Naive thymus-derived CD4-positive, alpha-beta T cell (primary cell): ENCODE measurements at regions of chr1 and their contacts with region 1.

Region 1: DNA sequence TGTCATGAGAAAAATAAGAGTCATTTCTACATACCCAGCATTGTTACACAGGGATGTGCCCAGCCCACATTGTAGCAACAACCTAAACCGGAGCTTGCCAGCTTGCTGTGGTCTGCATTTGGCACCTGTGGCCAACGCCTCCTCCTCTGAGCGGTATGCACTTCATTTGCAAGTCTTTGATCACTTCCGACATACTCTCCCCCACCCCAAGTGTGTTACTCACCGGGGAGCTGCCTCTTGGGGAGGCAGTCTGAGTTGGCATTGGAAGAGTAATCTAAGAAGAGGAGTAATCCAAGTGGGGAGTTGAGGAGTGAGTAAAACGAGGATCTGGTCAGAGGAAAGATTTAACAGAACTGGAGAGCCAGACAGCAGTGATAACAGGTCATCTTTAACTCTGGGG is 3.8 kb downstream of the BCL9 start:
- DNase-seq: peak; percentile 43 to 92 (median 86)
- ATAC-seq: peak; percentile 86
- H3K4me3 ChIP-seq: peak overlapping the region; percentile 17
- H3K4me3 Mint-ChIP-seq: peak overlapping the region in 4 of 10 donors; percentile 52 to 79 (median 64)
- H3K27ac ChIP-seq: peak overlapping the region; percentile 26
- H3K27ac Mint-ChIP-seq: peak overlapping the region in 2 of 9 donors; percentile 44 to 65
- H3K4me1 ChIP-seq: peaks cover 43 to 45% of the 10 kb centered on the region in 2 donors
- H3K4me1 Mint-ChIP-seq: peaks cover 45 to 74% (median 69%) of the 10 kb centered on the region in 7 donors
- H3K27me3 ChIP-seq: peaks cover 0 to 4% of the 10 kb centered on the region in 2 donors
- H3K27me3 Mint-ChIP-seq: peaks cover 0 to 3% (median 0%) of the 10 kb centered on the region in 5 donors

Region 2: GRCh38 chr1:147172168-147172992 is 372.8 kb before region 1 on chr1 and contains the start of gene PRKAB2:
- CTCF ChIA-PET with region 1: no interaction called
- POLR2A ChIA-PET with region 1: no interaction called
- intact Hi-C with region 1: loop called in 1 of 2 experiments (anchors 1 kb)
- DNase-seq: peak; percentile 67 to 95 (median 86)
- ATAC-seq: peak; percentile 93
- H3K4me3 ChIP-seq: peak within 1 kb of the TSS; percentile 91
- H3K4me3 Mint-ChIP-seq: peak within 1 kb of the TSS; percentile 82 to 99 (median 98)
- H3K27ac ChIP-seq: peak within 1 kb of the TSS; percentile 76
- H3K27ac Mint-ChIP-seq: peak within 1 kb of the TSS; percentile 66 to 96 (median 95)
- H3K4me1 ChIP-seq: peaks cover 15% of the 10 kb centered on the region in 2 donors
- H3K4me1 Mint-ChIP-seq: peaks cover 19 to 55% (median 41%) of the 10 kb centered on the region in 7 donors
- H3K27me3 ChIP-seq: no peaks in the 10 kb centered on the region
- H3K27me3 Mint-ChIP-seq: peaks cover 0 to 10% (median 0%) of the 10 kb centered on the region in 5 donors
- total RNA-seq, gene PRKAB2: 8.1 to 26.9 (median 11.4) TPM

Region 3: GRCh38 chr1:147515046-147515869 is 29.9 kb before region 1 on chr1:
- CTCF ChIA-PET with region 1: interaction called, 5 read pairs
- POLR2A ChIA-PET with region 1: interaction called, 5 read pairs
- intact Hi-C with region 1: loop called in 1 of 2 experiments (anchors 1 kb)
- DNase-seq: peak in 6 of 9 donors; percentile 11 to 37 (median 24)
- ATAC-seq: peak; percentile 42
- H3K4me3 ChIP-seq: no peak overlapping the region
- H3K4me3 Mint-ChIP-seq: no peak overlapping the region
- H3K27ac ChIP-seq: no peak overlapping the region
- H3K27ac Mint-ChIP-seq: peak overlapping the region in 1 of 9 donors; percentile 6
- H3K4me1 ChIP-seq: no peaks in the 10 kb centered on the region
- H3K4me1 Mint-ChIP-seq: peaks cover 0 to 15% (median 6%) of the 10 kb centered on the region in 7 donors
- H3K27me3 ChIP-seq: no peaks in the 10 kb centered on the region
- H3K27me3 Mint-ChIP-seq: peaks cover 0 to 19% (median 3%) of the 10 kb centered on the region in 5 donors

Region 4: GRCh38 chr1:147558045-147558444 is 12.9 kb after region 1 on chr1:
- CTCF ChIA-PET with region 1: interaction called, 3 read pairs
- POLR2A ChIA-PET with region 1: interaction called, 12 read pairs
- intact Hi-C with region 1: loop called in 1 of 2 experiments (anchors 2 kb)
- DNase-seq: no peak
- ATAC-seq: no peak
- H3K4me3 ChIP-seq: no peak overlapping the region
- H3K4me3 Mint-ChIP-seq: no peak overlapping the region
- H3K27ac ChIP-seq: no peak overlapping the region
- H3K27ac Mint-ChIP-seq: no peak overlapping the region
- H3K4me1 ChIP-seq: peaks cover 0 to 5% of the 10 kb centered on the region in 2 donors
- H3K4me1 Mint-ChIP-seq: peaks cover 0 to 43% (median 37%) of the 10 kb centered on the region in 7 donors
- H3K27me3 ChIP-seq: no peaks in the 10 kb centered on the region
- H3K27me3 Mint-ChIP-seq: no peaks in the 10 kb centered on the region

Region 5: DNA sequence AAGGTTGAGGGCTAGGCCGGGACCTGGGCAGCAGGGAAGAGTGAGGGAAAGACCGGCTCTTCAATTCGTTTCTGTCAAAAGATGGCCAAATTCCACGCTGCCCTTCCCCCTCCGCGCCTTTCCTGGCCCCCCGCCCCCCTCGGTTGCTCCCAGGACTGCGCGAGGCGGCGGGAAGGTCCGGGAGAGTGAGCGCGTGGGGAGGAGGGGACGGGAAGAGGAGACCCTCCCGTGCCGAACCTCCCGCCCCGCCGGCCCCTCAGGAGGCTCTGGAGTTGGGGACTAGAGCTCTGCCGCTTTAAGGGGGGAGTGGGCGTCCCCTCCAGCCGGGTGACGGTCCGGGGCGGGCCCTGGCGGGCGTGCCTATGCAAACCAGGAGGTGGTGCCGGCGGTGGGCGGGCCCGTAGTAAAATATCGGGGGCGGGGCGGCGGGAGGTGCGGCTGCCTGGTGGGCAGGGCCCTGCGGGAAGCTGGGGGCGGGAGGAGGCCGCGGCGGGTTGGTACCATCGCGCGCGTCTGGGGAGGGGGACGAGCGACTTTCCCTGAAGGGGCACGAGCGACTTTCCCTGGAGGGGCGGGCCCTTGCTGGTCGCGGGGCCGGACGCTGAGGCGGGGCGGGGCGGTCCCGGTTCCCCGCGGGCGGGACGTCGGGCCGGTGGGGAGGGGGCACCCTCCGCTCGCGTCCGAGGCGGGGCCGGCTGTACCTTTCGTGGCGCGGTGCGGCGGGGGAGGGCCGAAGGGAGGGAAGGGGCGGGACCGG is 54.4 kb after region 1 on chr1:
- CTCF ChIA-PET with region 1: interaction called, 9 read pairs
- POLR2A ChIA-PET with region 1: interaction called, 73 read pairs
- intact Hi-C with region 1: loop called (anchors 1 kb)
- DNase-seq: peak; percentile 90 to 97 (median 96)
- ATAC-seq: peak; percentile 90
- H3K4me3 ChIP-seq: peak overlapping the region; percentile 72
- H3K4me3 Mint-ChIP-seq: peak overlapping the region; percentile 82 to 96 (median 90)
- H3K27ac ChIP-seq: peak overlapping the region; percentile 73
- H3K27ac Mint-ChIP-seq: peak overlapping the region; percentile 55 to 94 (median 87)
- H3K4me1 ChIP-seq: peaks cover 8 to 15% of the 10 kb centered on the region in 2 donors
- H3K4me1 Mint-ChIP-seq: peaks cover 15 to 38% (median 35%) of the 10 kb centered on the region in 7 donors
- H3K27me3 ChIP-seq: no peaks in the 10 kb centered on the region
- H3K27me3 Mint-ChIP-seq: peaks cover 0 to 18% (median 0%) of the 10 kb centered on the region in 5 donors

Region 6: GRCh38 chr1:147640553-147641165 is 95.5 kb after region 1 on chr1:
- CTCF ChIA-PET with region 1: interaction called, 3 read pairs
- POLR2A ChIA-PET with region 1: interaction called, 4 read pairs
- intact Hi-C with region 1: loop called in 1 of 2 experiments (anchors 5 kb)
- DNase-seq: peak; percentile 51 to 77 (median 67)
- ATAC-seq: peak; percentile 100
- H3K4me3 ChIP-seq: no peak overlapping the region
- H3K4me3 Mint-ChIP-seq: peak overlapping the region in 2 of 10 donors; percentile 43 to 48
- H3K27ac ChIP-seq: no peak overlapping the region
- H3K27ac Mint-ChIP-seq: peak overlapping the region in 3 of 9 donors; percentile 13 to 60 (median 27)
- H3K4me1 ChIP-seq: peaks cover 3 to 11% of the 10 kb centered on the region in 2 donors
- H3K4me1 Mint-ChIP-seq: peaks cover 13 to 40% (median 25%) of the 10 kb centered on the region in 7 donors
- H3K27me3 ChIP-seq: no peaks in the 10 kb centered on the region
- H3K27me3 Mint-ChIP-seq: no peaks in the 10 kb centered on the region

Region 7: DNA sequence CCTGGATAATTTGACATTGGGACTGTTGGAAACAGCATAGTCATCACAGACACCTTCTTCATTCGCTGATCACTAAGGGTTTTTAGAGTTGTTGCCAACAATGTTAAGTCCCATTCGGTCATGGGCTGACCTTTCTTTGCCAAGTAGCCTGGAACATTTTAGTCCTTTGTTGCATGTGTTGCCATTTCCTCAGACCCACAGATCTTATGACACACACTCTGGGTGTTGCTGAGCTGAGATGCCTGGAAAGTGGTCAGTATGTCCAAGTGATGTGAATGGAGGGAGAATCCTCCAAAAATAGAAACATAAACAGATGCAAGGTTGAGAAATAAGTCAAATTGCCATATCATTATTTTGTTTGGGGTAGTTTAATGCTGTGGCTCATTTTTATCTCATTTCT is 276.8 kb after region 1 on chr1:
- CTCF ChIA-PET with region 1: no interaction called
- POLR2A ChIA-PET with region 1: no interaction called
- intact Hi-C with region 1: no loop called
- DNase-seq: no peak
- ATAC-seq: no peak
- H3K4me3 ChIP-seq: no peak overlapping the region
- H3K4me3 Mint-ChIP-seq: no peak overlapping the region
- H3K27ac ChIP-seq: no peak overlapping the region
- H3K27ac Mint-ChIP-seq: no peak overlapping the region
- H3K4me1 ChIP-seq: no peaks in the 10 kb centered on the region
- H3K4me1 Mint-ChIP-seq: no peaks in the 10 kb centered on the region
- H3K27me3 ChIP-seq: no peaks in the 10 kb centered on the region
- H3K27me3 Mint-ChIP-seq: peaks cover 0 to 21% (median 4%) of the 10 kb centered on the region in 5 donors